Keratinocyte (primary cell): ENCODE measurements at regions of chrX and their contacts with region 1.

Region 1: GRCh38 chrX:130155564-130155963 is 10.1 kb downstream of the AIFM1 start:
- DNase-seq: no peak
- H3K4me3 ChIP-seq: no peak overlapping the region
- H3K27ac ChIP-seq: no peak overlapping the region
- H3K4me1 ChIP-seq: no peaks in the 10 kb centered on the region
- H3K27me3 ChIP-seq: no peaks in the 10 kb centered on the region
- CTCF ChIP-seq: no peak

Region 2: GRCh38 chrX:130186651-130187050 is 31.1 kb after region 1 on chrX:
- dilution Hi-C with region 1: no loop called
- DNase-seq: no peak
- H3K4me3 ChIP-seq: no peak overlapping the region
- H3K27ac ChIP-seq: no peak overlapping the region
- H3K4me1 ChIP-seq: no peaks in the 10 kb centered on the region
- H3K27me3 ChIP-seq: no peaks in the 10 kb centered on the region
- CTCF ChIP-seq: no peak

Region 3: DNA sequence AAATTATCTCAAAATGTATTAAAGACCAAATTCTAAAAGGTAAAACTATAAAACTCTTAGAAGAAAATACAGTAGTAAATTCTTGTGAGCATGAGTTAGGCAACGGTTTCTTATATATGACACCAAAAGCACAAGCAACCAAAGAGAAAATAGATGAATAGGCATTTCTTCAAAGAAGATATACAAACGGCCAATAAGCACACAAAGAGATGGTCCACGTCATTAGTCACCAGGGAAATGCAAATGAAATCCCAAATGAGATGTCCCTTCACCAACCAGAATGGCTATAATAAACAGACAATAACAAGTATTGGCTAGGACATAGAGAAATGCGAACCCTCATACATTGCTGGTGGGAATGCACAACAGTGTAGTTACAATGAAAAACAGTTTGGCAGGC is 60.8 kb after region 1 on chrX:
- dilution Hi-C with region 1: loop called (anchors 10 kb)
- DNase-seq: no peak
- H3K4me3 ChIP-seq: no peak overlapping the region
- H3K27ac ChIP-seq: no peak overlapping the region
- H3K4me1 ChIP-seq: no peaks in the 10 kb centered on the region
- H3K27me3 ChIP-seq: no peaks in the 10 kb centered on the region
- CTCF ChIP-seq: no peak